Mammary epithelial cell (primary cell): ENCODE measurements at regions of chr3 and their contacts with region 1.

Region 1: DNA sequence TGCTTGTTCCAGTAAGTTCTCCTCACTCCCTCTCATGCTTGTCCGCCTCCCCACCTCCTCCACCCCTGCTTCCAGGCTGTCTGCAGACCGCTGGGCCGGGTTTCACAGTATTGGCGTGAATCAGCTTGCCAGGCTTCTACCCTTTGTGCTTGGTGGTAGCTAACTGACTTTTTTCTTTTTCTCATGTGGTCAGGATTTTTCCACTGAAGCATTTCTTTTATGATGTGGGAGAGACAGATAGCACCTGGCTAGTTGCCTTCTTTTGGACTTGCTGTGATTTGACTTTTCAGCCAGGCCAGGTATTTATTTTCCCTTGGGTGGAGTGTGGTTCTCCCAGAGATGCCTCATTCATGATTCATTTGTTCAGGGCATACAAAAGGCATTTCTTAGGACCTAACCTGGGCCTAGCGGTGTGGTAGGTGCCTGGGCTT is 60.6 kb downstream of the ST6GAL1 start:
- DNase-seq: peak; percentile 98
- H3K4me3 ChIP-seq: no peak overlapping the region
- H3K27ac ChIP-seq: peak overlapping the region; percentile 79
- H3K4me1 ChIP-seq: peaks cover 25% of the 10 kb centered on the region
- H3K27me3 ChIP-seq: no peaks in the 10 kb centered on the region
- CTCF ChIP-seq: no peak

Region 2: GRCh38 chr3:187066228-187066995 is 75.5 kb after region 1 on chr3:
- CTCF ChIA-PET with region 1: no interaction called
- dilution Hi-C with region 1: no loop called
- in situ Hi-C with region 1: no loop called
- intact Hi-C with region 1: loop called (anchors 5 kb)
- DNase-seq: peak; percentile 64
- H3K4me3 ChIP-seq: no peak overlapping the region
- H3K27ac ChIP-seq: no peak overlapping the region
- H3K4me1 ChIP-seq: peaks cover 30% of the 10 kb centered on the region
- H3K27me3 ChIP-seq: no peaks in the 10 kb centered on the region
- CTCF ChIP-seq: peak; percentile 39 to 48